H1 (cell line): ENCODE measurements at regions of chr4 and their contacts with region 1.

Region 1: GRCh38 chr4:83510442-83510841 is 25.5 kb upstream of the GPAT3 start:
- DNase-seq: no peak
- H3K4me3 ChIP-seq: no peak overlapping the region
- H3K27ac ChIP-seq: no peak overlapping the region
- H3K4me1 ChIP-seq: no peaks in the 10 kb centered on the region
- H3K27me3 ChIP-seq: no peaks in the 10 kb centered on the region
- CTCF ChIP-seq: no peak
- EP300 ChIP-seq: no peak
- POLR2A ChIP-seq: no peak
- RAD21 ChIP-seq: no peak

Region 2: DNA sequence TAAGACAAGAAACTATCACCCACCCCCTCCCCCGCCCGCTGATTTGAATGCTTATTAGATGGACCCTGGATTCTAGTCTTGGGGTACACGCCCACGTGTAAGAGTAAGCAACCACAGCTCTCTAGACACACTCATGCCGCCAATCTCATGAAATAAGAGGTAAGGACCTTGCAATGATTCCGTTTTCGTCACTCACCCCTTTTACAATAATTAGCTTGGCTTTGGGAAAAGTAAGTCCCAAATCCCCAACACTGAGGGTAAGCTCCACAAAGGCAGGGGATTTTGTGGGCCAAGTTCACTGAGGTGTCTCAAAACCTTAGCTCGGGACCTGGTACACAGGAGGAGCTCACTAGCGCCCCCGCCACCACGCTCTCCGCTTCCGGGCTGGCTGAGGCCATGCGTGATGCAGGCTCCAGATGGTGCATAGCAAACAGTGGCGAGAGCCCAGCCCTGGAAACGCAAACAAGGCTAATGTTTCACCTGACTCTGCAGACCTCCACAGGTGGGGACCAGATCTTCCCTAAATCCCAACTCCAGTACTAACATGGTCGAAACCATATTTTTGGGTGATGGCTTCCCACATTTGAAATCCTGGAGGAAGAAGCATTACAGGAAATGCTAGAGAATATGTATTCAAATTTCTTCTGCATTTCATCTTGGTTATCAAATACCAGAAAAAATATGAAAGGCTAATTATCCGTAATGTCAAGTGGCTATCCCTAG is 400.1 kb before region 1 on chr4:
- CTCF ChIA-PET with region 1: no interaction called
- POLR2A ChIA-PET with region 1: no interaction called
- DNase-seq: peak; percentile 84
- H3K4me3 ChIP-seq: peak overlapping the region; percentile 60 to 88 (median 66)
- H3K27ac ChIP-seq: no peak overlapping the region
- H3K4me1 ChIP-seq: peaks cover 0 to 10% (median 1%) of the 10 kb centered on the region in 4 experiments; a peak in 3 of 7 replicates
- H3K27me3 ChIP-seq: peaks cover 0 to 10% (median 2%) of the 10 kb centered on the region in 4 experiments; a peak in 4 of 7 replicates
- CTCF ChIP-seq: peak; percentile 53 to 82 (median 74); a peak in 3 of 4 replicates
- EP300 ChIP-seq: no peak
- POLR2A ChIP-seq: peak in 1 of 2 experiments; percentile 56
- RAD21 ChIP-seq: peak; percentile 36 to 49; a peak in 3 of 4 replicates

Region 3: DNA sequence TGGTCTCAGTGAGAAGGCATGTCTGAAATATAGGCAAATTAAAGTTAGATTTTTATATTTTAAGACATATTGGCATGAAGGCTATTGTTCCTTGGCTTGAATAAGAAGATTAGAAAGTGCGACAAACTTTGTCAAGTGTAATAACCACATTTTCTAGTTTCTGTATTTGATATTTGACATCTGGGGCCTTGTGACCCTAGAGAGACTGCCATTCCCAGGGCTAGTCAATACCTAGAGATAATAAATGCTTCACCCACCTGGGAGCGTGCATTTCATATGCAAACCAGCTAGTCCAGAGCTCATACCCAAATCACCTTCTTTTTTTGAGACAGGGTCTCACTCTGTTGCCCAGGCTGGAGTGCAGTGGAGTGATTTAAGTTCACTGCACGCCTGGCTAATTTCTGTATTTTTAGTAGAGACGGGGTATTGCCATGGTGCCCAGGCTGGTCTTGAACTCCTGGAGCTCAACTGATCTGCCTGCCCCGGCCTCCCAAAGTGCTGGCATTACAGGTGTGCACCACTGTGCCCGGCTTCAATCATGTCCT is 288.5 kb before region 1 on chr4:
- CTCF ChIA-PET with region 1: no interaction called
- POLR2A ChIA-PET with region 1: no interaction called
- DNase-seq: no peak
- H3K4me3 ChIP-seq: no peak overlapping the region
- H3K27ac ChIP-seq: no peak overlapping the region
- H3K4me1 ChIP-seq: no peaks in the 10 kb centered on the region
- H3K27me3 ChIP-seq: no peaks in the 10 kb centered on the region
- CTCF ChIP-seq: no peak
- EP300 ChIP-seq: no peak
- POLR2A ChIP-seq: no peak
- RAD21 ChIP-seq: no peak

Region 4: GRCh38 chr4:83498187-83498586 is 12.3 kb before region 1 on chr4:
- CTCF ChIA-PET with region 1: interaction called, 34 read pairs
- POLR2A ChIA-PET with region 1: no interaction called
- DNase-seq: no peak
- H3K4me3 ChIP-seq: no peak overlapping the region
- H3K27ac ChIP-seq: no peak overlapping the region
- H3K4me1 ChIP-seq: no peaks in the 10 kb centered on the region
- H3K27me3 ChIP-seq: no peaks in the 10 kb centered on the region
- CTCF ChIP-seq: no peak
- EP300 ChIP-seq: no peak
- POLR2A ChIP-seq: no peak
- RAD21 ChIP-seq: no peak

Region 5: GRCh38 chr4:83522239-83522638 is 11.8 kb after region 1 on chr4:
- CTCF ChIA-PET with region 1: interaction called, 15 read pairs
- POLR2A ChIA-PET with region 1: interaction called, 3 read pairs
- DNase-seq: no peak
- H3K4me3 ChIP-seq: no peak overlapping the region
- H3K27ac ChIP-seq: no peak overlapping the region
- H3K4me1 ChIP-seq: no peaks in the 10 kb centered on the region
- H3K27me3 ChIP-seq: no peaks in the 10 kb centered on the region
- CTCF ChIP-seq: no peak
- EP300 ChIP-seq: no peak
- POLR2A ChIP-seq: no peak
- RAD21 ChIP-seq: no peak

Region 6: DNA sequence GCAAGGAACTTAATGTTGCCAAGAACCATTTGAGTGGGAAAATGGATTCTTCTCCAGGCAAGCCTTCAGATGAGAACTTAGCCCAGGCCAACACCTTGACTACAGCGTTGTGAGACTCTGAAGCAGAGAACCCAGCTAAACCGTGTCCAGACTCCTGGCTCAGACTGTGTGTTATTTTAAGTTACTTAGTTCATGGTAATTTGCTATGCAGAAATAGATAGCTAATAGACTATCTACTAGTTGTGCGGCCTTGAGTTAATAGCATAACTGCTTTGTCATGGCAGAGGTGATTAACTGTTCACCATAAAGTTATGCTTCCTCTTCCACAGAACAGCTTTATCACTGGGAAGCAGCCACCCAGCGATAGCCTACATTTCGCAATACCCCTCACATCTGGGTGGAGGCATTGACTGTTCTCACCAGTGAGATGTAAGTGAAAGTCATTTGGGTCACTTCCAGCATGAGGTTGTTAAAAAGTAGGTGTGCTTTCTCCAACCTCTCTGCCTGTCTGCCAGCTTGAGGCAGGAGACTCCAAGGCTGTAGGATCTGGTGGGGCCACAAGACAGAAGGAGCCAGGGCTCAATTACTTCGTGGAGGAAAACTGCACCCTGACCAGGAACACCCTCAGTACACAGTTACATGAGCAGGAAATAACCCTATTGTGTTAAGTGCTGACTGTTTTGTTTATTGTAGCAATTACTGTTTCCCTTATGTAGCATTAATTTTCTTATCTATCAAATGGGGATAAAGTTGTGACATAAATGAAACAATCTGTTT is 119.7 kb after region 1 on chr4:
- CTCF ChIA-PET with region 1: interaction called, 19 read pairs
- POLR2A ChIA-PET with region 1: no interaction called
- DNase-seq: no peak
- H3K4me3 ChIP-seq: no peak overlapping the region
- H3K27ac ChIP-seq: no peak overlapping the region
- H3K4me1 ChIP-seq: no peaks in the 10 kb centered on the region
- H3K27me3 ChIP-seq: no peaks in the 10 kb centered on the region
- CTCF ChIP-seq: no peak
- EP300 ChIP-seq: no peak
- POLR2A ChIP-seq: no peak
- RAD21 ChIP-seq: no peak

Region 7: GRCh38 chr4:83639849-83640493 is 129.5 kb after region 1 on chr4:
- CTCF ChIA-PET with region 1: interaction called, 58 read pairs
- POLR2A ChIA-PET with region 1: no interaction called
- DNase-seq: peak in 1 of 2 experiments; percentile 58
- H3K4me3 ChIP-seq: no peak overlapping the region
- H3K27ac ChIP-seq: no peak overlapping the region
- H3K4me1 ChIP-seq: no peaks in the 10 kb centered on the region
- H3K27me3 ChIP-seq: no peaks in the 10 kb centered on the region
- CTCF ChIP-seq: peak in 2 of 3 experiments; percentile 69 to 76; a peak in 3 of 4 replicates
- EP300 ChIP-seq: no peak
- POLR2A ChIP-seq: no peak
- RAD21 ChIP-seq: peak; percentile 90 to 92